AG04450 (cell line): ENCODE measurements at regions of chr3 and their contacts with region 1.

Region 1: DNA sequence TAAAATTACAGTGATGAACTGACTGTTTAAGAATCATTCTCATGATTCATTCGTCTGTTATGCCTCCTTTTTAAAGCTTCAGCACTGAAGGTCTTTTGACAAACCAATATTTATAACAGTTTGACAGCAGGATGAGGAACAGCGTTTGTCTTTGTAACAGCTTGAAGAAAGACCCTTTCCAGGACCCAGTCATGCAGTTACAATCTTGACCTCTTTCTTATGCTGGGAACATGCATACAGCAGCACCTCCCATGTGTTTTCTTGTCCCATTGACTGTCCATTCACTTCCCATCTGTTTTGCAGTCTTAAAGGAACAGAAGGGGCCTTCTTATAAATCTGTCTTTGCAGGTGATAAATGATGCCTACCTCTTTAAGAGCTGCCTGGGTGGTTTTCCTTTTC is 87.2 kb downstream of the OPA1 start:
- DNase-seq: peak; percentile 20
- H3K4me3 ChIP-seq: no peak overlapping the region
- H3K27ac ChIP-seq: no peak overlapping the region
- H3K27me3 ChIP-seq: no peaks in the 10 kb centered on the region
- CTCF ChIP-seq: no peak

Region 2: DNA sequence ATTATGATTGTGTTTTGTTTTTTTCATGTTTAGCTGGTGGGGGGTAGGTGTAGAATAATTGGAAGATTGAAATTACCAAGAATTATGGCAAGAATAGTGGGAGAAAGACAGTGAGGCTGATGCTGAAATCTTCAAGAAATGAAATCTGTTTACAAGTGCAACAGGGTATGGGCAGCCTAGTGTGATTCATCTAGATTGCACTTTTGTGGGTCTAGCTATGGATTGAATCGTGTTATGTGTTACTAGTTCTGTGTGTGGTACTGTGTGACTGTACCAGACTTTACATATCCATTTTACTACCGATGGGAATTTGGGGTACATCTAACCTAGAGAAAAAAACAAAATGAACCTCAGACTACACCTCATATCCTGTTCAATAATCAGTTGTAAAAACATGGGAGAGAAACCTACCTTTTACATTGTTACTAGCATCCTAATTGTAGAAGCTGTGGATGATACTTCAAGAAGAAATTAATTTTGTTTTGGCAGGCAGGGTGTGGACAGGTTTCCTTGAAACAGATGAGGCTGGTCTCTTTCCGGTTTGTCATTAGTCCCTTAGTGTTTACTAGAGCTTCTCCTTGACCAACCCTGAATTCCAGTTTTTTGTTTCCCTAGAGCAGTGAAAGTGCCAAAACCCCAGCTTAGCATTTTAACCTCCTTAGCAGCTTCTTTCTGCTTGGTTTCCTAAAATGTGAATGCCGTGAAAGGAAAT is 39.3 kb before region 1 on chr3:
- CTCF ChIA-PET with region 1: interaction called, 15 read pairs
- POLR2A ChIA-PET with region 1: no interaction called
- DNase-seq: no peak
- H3K4me3 ChIP-seq: no peak overlapping the region
- H3K27ac ChIP-seq: no peak overlapping the region
- H3K27me3 ChIP-seq: no peaks in the 10 kb centered on the region
- CTCF ChIP-seq: no peak

Region 3: DNA sequence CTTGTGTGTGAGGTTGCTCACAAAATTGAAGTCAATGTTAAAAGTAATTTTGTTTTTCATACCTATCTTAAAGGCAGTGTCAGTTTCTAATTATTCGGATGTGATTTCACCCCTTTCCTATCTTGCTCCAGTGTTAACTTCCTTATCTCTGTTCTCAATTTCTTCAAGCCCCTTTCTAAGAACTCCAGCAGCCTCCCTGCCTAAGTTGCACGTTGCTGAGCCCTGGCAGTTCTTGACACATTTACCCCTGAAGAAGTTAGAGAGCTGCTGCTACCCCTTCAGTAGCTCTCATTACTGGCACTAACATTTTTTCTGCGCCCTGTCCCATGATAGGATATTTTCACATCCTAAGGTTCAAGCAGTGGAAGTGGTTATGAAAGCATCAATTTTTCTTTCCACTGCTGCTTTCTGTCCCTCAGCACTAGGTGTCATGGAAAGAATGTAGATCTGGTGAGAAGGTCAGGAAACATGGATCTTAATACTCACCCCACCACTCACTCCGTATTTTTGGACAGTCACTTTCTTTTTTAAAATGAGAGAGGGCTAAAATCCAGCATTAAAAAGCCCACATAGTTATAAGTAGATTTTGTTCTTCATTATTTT is 24.3 kb before region 1 on chr3:
- CTCF ChIA-PET with region 1: no interaction called
- POLR2A ChIA-PET with region 1: no interaction called
- DNase-seq: no peak
- H3K4me3 ChIP-seq: no peak overlapping the region
- H3K27ac ChIP-seq: no peak overlapping the region
- H3K27me3 ChIP-seq: no peaks in the 10 kb centered on the region
- CTCF ChIP-seq: no peak

Region 4: DNA sequence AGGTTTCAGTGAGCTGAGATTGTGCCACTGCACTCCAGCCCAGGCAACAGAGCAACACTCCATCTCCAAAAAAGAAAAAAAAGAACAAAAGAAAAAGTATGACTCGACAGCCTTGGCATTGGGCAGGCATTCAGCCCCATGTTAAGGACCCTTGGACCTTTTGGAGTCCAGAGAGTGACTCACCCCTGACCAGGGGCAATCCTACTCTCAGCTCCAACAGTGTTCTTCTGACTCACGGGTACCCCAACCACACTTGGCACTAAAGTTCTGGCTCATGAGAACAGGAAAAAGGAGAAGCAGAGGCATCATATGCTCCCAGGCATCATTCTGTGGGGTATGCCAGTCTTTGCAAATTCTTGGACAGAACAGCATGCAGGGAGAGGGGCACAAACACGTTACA is 203.3 kb after region 1 on chr3:
- CTCF ChIA-PET with region 1: no interaction called
- POLR2A ChIA-PET with region 1: no interaction called
- DNase-seq: no peak
- H3K4me3 ChIP-seq: no peak overlapping the region
- H3K27ac ChIP-seq: no peak overlapping the region
- H3K27me3 ChIP-seq: peaks cover 20% of the 10 kb centered on the region
- CTCF ChIP-seq: no peak